ENCODE measurements at regions of chr10 and their contacts with region 1.

Region 1: GRCh38 chr10:130190055-130190736 is 54.0 kb downstream of the GLRX3 start:
- DNase-seq: peak; percentile 90 to 96 (median 96)
- ATAC-seq: peak; percentile 92 to 93
- H3K4me3 ChIP-seq: peak overlapping the region; percentile 47
- H3K27ac ChIP-seq: no peak overlapping the region
- H3K4me1 ChIP-seq: no peaks in the 10 kb centered on the region
- H3K27me3 ChIP-seq: no peaks in the 10 kb centered on the region

Region 2: GRCh38 chr10:131874991-131875451 is 1684.8 kb after region 1 on chr10:
- intact Hi-C with region 1: loop called in 2 of 4 experiments (anchors 5 to 10 kb)
- DNase-seq: peak; percentile 72 to 88 (median 87)
- ATAC-seq: peak; percentile 35 to 72
- H3K4me3 ChIP-seq: no peak overlapping the region
- H3K27ac ChIP-seq: no peak overlapping the region
- H3K4me1 ChIP-seq: no peaks in the 10 kb centered on the region
- H3K27me3 ChIP-seq: no peaks in the 10 kb centered on the region

Measured in right cardiac atrium (tissue), 5 donors.